WTC11 (cell line): ENCODE measurements at regions of chr5 and their contacts with region 1.

Region 1: DNA sequence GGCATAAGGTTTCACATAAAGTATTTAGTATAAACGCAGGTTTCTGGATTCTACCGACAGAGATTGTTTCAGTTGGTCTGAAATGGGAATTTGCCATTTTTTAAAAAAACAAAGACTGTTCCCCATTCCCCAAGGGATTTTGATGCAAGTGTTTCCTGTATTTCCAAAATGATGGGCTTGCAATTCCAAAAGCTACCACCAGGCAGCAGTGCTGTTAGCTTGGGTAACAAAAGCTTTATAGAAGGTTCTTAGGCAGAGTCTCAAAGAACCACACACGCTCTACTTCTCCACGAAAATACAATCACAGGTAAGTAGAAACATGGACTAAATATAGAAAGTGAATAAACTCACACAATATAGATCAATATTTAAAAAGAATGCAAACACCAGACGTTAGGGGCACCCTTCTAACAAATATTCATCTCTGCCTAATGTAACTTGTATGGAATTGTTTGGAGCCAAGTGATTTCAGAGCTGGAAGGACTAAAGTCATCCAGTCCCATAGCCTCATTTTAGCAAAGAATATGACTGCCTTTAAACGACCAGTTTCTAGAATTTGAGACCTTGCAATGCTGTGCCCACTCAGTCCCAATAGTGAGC is 154.3 kb downstream of the SPOCK1 start:
- DNase-seq: peak; percentile 74
- ATAC-seq: peak; percentile 31; the same call in 1 of the 2 replicates
- H3K4me3 Mint-ChIP-seq: no peak overlapping the region
- H3K27ac Mint-ChIP-seq: no peak overlapping the region
- H3K4me1 Mint-ChIP-seq: peaks cover 40% of the 10 kb centered on the region
- H3K27me3 Mint-ChIP-seq: no peaks in the 10 kb centered on the region
- CTCF ChIP-seq: peak; percentile 82

Region 2: DNA sequence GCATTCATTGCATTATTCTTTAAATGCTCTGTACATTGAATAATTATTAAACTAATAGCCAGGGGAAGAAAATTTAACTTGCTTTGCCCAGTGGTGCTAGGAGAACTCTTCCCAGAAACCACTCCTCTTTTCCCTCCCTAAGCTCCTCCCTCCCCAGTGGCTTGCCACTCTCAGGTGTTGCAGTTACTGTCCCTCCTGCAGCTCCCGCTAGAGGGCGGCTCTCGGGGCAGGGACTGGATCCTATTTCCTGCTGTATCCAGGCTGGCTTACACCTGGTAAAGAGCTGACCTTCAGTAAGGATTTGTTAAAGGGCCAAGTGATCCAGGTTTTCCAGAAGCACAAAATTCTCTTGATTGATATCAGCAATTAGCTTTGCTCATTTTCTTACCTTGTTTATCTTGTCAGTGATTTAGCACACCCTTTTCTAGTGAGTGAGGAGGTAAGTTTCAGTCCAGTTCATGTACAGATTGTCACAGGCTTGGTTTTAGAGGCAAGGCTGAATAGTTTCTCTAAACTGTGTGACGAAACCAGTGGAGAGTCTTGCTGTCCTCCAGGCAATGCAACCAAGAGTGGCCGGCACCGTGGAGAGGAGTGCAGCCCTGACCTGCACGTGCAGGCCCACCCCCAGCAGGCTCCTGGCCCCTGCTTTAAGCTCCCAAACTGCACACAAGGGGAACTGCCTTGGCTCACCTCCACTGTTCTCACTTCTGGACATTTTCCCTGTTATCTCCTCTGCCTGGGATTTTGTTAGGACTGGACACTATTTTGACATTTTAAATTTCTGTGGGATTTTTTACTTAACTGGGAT is 269.5 kb before region 1 on chr5:
- CTCF ChIA-PET with region 1: interaction called, 11 read pairs
- POLR2A ChIA-PET with region 1: no interaction called
- DNase-seq: peak; percentile 94
- ATAC-seq: peak; percentile 100
- H3K4me3 Mint-ChIP-seq: no peak overlapping the region
- H3K27ac Mint-ChIP-seq: peak overlapping the region; percentile 13; the same call in 1 of the 2 replicates
- H3K4me1 Mint-ChIP-seq: peaks cover 24% of the 10 kb centered on the region
- H3K27me3 Mint-ChIP-seq: no peaks in the 10 kb centered on the region
- CTCF ChIP-seq: peak; percentile 68

Region 3: DNA sequence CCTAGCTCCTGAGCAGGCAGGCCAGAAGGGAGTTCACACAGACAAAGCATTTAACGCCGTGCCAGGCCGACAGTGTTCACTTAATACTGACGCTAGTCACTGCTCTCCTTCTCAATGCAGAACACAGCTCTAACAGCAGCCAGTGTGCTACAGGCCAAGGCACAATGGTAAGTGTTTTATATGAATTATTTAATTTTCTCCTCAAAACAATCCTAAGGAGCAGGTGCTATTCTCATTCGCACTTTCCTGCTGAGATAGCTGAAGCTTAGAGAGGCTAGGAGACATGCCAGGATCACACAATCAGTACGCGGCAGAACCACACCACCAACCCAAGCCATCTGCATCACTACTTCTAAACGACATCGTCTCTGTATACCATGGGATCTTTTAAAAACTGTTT is 16.4 kb before region 1 on chr5:
- CTCF ChIA-PET with region 1: interaction called, 13 read pairs
- POLR2A ChIA-PET with region 1: no interaction called
- DNase-seq: no peak
- ATAC-seq: no peak
- H3K4me3 Mint-ChIP-seq: no peak overlapping the region
- H3K27ac Mint-ChIP-seq: no peak overlapping the region
- H3K4me1 Mint-ChIP-seq: peaks cover 8% of the 10 kb centered on the region
- H3K27me3 Mint-ChIP-seq: no peaks in the 10 kb centered on the region
- CTCF ChIP-seq: no peak

Region 4: GRCh38 chr5:137365126-137365865 is 20.5 kb after region 1 on chr5:
- CTCF ChIA-PET with region 1: interaction called, 15 read pairs
- POLR2A ChIA-PET with region 1: no interaction called
- DNase-seq: no peak
- ATAC-seq: no peak
- H3K4me3 Mint-ChIP-seq: no peak overlapping the region
- H3K27ac Mint-ChIP-seq: no peak overlapping the region
- H3K4me1 Mint-ChIP-seq: no peaks in the 10 kb centered on the region
- H3K27me3 Mint-ChIP-seq: no peaks in the 10 kb centered on the region; the same call in 1 of the 2 replicates
- CTCF ChIP-seq: no peak

Region 5: GRCh38 chr5:137405393-137405792 is 60.6 kb after region 1 on chr5:
- CTCF ChIA-PET with region 1: interaction called, 11 read pairs
- POLR2A ChIA-PET with region 1: no interaction called
- DNase-seq: peak; percentile 13
- ATAC-seq: peak; percentile 78
- H3K4me3 Mint-ChIP-seq: no peak overlapping the region
- H3K27ac Mint-ChIP-seq: no peak overlapping the region
- H3K4me1 Mint-ChIP-seq: no peaks in the 10 kb centered on the region
- H3K27me3 Mint-ChIP-seq: no peaks in the 10 kb centered on the region
- CTCF ChIP-seq: no peak

Region 6: DNA sequence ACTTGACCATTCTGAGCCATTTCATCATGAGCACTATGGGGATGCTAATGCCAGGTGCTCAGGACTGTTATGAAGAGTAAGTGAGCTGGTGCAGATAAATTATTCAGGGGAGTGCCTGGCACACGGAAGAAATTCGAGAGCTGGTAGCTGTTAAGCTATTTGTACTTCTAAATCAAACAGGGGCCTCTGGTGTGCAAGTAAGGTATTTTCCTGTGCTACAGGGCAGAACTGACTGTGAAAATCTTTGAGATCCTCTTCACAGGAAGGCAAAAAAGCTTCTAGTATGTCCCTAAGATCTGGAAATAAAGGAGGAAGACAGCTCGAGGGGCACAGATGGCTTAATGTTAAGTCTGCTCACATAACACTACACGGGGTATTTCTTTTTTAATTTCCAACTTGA is 260.6 kb after region 1 on chr5:
- CTCF ChIA-PET with region 1: interaction called, 26 read pairs
- POLR2A ChIA-PET with region 1: no interaction called
- DNase-seq: no peak
- ATAC-seq: peak; percentile 36; the same call in 1 of the 2 replicates
- H3K4me3 Mint-ChIP-seq: no peak overlapping the region
- H3K27ac Mint-ChIP-seq: no peak overlapping the region
- H3K4me1 Mint-ChIP-seq: peaks cover 7% of the 10 kb centered on the region
- H3K27me3 Mint-ChIP-seq: no peaks in the 10 kb centered on the region; the same call in 1 of the 2 replicates
- CTCF ChIP-seq: no peak